Activated B cell treated with CpG ODN at 0.5 μM for 24 hours (primary cell): ENCODE measurements at regions of chr2 and their contacts with region 1.

Region 1: GRCh38 chr2:128736689-128737545 is 418.2 kb upstream of the HS6ST1 start:
- DNase-seq: peak; percentile 66
- ATAC-seq: peak; percentile 72
- H3K4me3 Mint-ChIP-seq: peak overlapping the region; percentile 76
- H3K27ac Mint-ChIP-seq: no peak overlapping the region
- H3K4me1 Mint-ChIP-seq: peaks cover 18% of the 10 kb centered on the region
- H3K27me3 Mint-ChIP-seq: peaks cover 7% of the 10 kb centered on the region
- CTCF ChIP-seq: peak; percentile 66

Region 2: DNA sequence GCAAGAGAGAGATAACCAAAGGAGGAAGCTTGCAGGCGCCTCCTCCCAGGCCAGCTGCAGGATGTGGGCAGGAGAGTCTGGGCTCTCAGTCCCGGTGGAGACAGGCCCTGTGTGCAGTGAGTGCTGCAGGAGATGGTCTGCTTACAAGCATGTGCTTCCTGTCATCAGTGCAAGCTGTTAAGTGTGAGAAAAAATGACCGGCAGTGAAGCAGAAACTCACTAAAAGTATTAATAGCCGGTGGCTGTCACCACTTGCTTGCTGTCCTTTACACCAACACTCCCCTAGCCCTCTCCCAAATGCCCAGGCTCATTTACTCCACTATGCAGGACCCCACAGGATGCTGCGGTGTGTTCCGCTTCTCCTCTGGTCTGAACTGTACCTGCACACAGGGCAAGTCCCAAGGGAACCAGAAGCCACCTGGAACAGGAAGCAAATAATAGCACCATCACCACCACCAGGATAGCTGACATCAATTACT is 17.4 kb after region 1 on chr2:
- CTCF ChIA-PET with region 1: interaction called, 8 read pairs
- POLR2A ChIA-PET with region 1: no interaction called
- intact Hi-C with region 1: loop called (anchors 1 kb)
- DNase-seq: no peak
- ATAC-seq: peak; percentile 84
- H3K4me3 Mint-ChIP-seq: peak overlapping the region; percentile 39
- H3K27ac Mint-ChIP-seq: peak overlapping the region; percentile 43
- H3K4me1 Mint-ChIP-seq: peaks cover 57% of the 10 kb centered on the region
- H3K27me3 Mint-ChIP-seq: no peaks in the 10 kb centered on the region
- CTCF ChIP-seq: no peak

Region 3: GRCh38 chr2:128774320-128775216 is 37.7 kb after region 1 on chr2:
- CTCF ChIA-PET with region 1: no interaction called
- POLR2A ChIA-PET with region 1: no interaction called
- intact Hi-C with region 1: no loop called
- DNase-seq: no peak
- ATAC-seq: no peak
- H3K4me3 Mint-ChIP-seq: no peak overlapping the region
- H3K27ac Mint-ChIP-seq: no peak overlapping the region
- H3K4me1 Mint-ChIP-seq: peaks cover 6% of the 10 kb centered on the region
- H3K27me3 Mint-ChIP-seq: no peaks in the 10 kb centered on the region
- CTCF ChIP-seq: no peak

Region 4: GRCh38 chr2:128784626-128785306 is 47.8 kb after region 1 on chr2:
- CTCF ChIA-PET with region 1: no interaction called
- POLR2A ChIA-PET with region 1: no interaction called
- intact Hi-C with region 1: no loop called
- DNase-seq: no peak
- ATAC-seq: no peak
- H3K4me3 Mint-ChIP-seq: no peak overlapping the region
- H3K27ac Mint-ChIP-seq: no peak overlapping the region
- H3K4me1 Mint-ChIP-seq: no peaks in the 10 kb centered on the region
- H3K27me3 Mint-ChIP-seq: peaks cover 3% of the 10 kb centered on the region
- CTCF ChIP-seq: no peak

Region 5: DNA sequence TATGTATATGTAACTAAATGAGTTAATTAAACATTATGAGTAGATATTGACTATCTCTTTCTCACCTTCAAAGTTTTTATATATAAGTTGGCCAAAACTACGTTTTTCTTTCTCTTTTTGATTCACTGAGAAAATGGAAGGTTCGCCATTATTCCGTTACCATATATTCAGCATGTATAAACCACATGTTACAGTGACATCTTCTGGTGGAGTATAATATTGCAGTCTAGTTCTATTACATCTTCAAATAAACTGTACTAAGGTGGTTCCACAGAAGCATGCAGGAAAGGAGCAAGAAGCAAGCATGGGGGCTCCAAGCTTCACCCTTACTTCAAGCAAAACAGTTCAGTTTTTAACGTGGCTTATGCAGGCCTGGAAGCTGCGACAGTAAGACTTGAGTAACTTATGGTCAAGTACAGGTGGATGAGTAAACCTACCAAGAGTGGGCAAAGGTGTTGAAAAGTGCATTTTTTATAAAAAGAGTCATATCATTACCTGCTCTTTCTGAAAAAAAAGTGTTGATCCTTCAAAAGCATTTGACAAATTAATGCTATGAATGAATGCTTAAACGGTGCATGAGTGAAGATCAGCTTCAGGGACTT is 1112.7 kb after region 1 on chr2:
- CTCF ChIA-PET with region 1: interaction called, 5 read pairs
- POLR2A ChIA-PET with region 1: no interaction called
- intact Hi-C with region 1: loop called (anchors 1 kb)
- DNase-seq: no peak
- ATAC-seq: peak; percentile 82
- H3K4me3 Mint-ChIP-seq: no peak overlapping the region
- H3K27ac Mint-ChIP-seq: no peak overlapping the region
- H3K4me1 Mint-ChIP-seq: peaks cover 1% of the 10 kb centered on the region
- H3K27me3 Mint-ChIP-seq: peaks cover 17% of the 10 kb centered on the region
- CTCF ChIP-seq: no peak

Region 6: DNA sequence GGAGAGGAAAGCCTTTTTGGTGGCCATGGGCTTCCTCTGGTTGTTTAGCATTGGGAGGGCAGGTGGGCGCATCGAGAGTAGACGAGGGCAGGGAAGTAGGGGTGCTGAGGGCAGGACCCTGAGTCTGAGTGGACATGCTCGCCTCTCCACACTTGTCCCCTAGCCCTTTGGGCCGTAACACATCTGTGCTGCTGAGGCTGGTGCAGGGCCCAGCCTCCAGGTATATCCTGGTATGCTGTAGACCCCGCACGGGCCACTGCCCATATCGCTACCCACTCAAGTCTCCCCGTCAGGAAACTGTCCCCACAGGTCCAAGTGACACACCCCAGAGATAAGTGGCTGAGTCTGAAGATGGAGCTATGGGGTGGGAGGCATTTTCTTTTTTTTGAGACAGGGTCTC is 1421.7 kb after region 1 on chr2:
- CTCF ChIA-PET with region 1: no interaction called
- POLR2A ChIA-PET with region 1: no interaction called
- intact Hi-C with region 1: loop called (anchors 2 kb)
- DNase-seq: no peak
- ATAC-seq: no peak
- H3K4me3 Mint-ChIP-seq: no peak overlapping the region
- H3K27ac Mint-ChIP-seq: peak overlapping the region; percentile 90
- H3K4me1 Mint-ChIP-seq: peaks cover 33% of the 10 kb centered on the region
- H3K27me3 Mint-ChIP-seq: no peaks in the 10 kb centered on the region
- CTCF ChIP-seq: no peak

Region 7: DNA sequence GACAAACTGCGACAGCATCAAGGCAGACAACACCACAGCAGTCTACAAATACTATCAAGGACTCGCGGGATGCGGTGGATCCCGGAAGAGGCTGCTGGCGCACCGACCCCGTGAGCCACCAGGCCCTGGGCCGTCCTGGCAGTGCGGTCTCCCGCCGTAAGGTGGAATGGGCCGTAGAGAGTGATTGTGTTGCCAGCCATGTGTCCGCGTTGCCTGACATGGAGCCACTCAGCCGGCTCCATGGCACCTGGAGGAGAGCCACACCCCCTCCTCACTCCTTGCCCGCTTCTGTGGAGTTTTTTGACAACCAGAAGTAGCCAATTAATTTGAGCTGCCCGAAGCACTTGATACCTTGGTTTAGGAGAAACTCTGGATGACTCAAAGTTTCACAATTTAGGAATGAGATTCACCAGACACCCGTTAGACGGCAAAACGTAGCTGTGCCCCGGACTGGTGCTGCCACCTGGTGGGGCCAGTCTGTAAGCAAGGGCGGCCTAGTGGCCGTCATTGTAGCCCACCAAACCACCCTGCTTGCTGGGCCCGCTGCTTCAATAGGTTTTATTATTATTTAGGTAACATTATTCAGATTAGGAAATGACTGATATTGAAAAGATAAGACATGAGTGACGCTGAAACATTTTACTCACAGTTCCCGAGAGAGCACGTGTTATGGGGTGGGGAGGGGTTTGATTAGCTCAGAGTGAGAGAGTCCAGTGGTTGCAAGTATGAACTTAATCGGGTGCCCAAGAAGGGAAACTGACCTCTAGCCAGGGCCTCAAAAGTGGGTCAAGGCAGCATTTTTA is 1595.6 kb after region 1 on chr2:
- CTCF ChIA-PET with region 1: interaction called, 4 read pairs
- POLR2A ChIA-PET with region 1: no interaction called
- intact Hi-C with region 1: loop called (anchors 2 kb)
- DNase-seq: peak; percentile 65
- ATAC-seq: peak; percentile 91
- H3K4me3 Mint-ChIP-seq: peak overlapping the region; percentile 36
- H3K27ac Mint-ChIP-seq: no peak overlapping the region
- H3K4me1 Mint-ChIP-seq: peaks cover 4% of the 10 kb centered on the region
- H3K27me3 Mint-ChIP-seq: peaks cover 20% of the 10 kb centered on the region
- CTCF ChIP-seq: peak; percentile 94